ENCODE measurements at regions of chr7 and their contacts with region 1.

Region 1: DNA sequence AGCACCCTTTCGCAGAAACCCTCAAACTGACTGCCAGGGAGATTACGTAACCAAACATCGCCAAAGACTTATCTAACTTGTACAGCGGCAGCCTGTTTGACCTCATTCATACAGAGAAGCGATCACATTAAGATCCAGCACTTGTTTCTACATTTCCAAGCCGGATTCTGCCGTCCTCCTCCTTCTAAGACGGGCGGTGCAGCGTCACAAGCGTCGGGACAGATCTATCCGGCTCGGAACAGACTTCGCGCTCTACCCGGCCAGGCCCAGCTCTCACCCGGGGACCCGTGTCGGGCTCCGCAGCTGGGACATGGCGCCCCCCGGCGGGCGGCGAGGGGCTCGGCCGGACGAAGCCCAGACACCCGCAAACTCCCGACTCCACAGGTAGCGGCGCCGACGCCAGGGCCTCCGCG is 373 bp downstream of the H2AZ2 start:
- DNase-seq: peak; percentile 73 to 82 (median 82)
- H3K4me3 ChIP-seq: peak overlapping the region; percentile 79 to 98 (median 89)
- H3K4me3 Mint-ChIP-seq: peak overlapping the region; percentile 91 to 98
- H3K27ac ChIP-seq: peak overlapping the region; percentile 88 to 92
- H3K27ac Mint-ChIP-seq: peak overlapping the region; percentile 95 to 99 (median 98)
- H3K4me1 ChIP-seq: peaks cover 36 to 53% of the 10 kb centered on the region in 2 donors
- H3K4me1 Mint-ChIP-seq: peaks cover 48% of the 10 kb centered on the region
- H3K27me3 ChIP-seq: no peaks in the 10 kb centered on the region
- H3K27me3 Mint-ChIP-seq: no peaks in the 10 kb centered on the region
- CTCF ChIP-seq: peak; percentile 93

Region 2: GRCh38 chr7:44581879-44582603 is 265.5 kb before region 1 on chr7 and contains the start of gene TMED4:
- intact Hi-C with region 1: loop called (anchors 5 kb)
- DNase-seq: peak; percentile 99
- H3K4me3 ChIP-seq: peak within 1 kb of the TSS; percentile 69 to 90 (median 81)
- H3K4me3 Mint-ChIP-seq: peak within 1 kb of the TSS; percentile 87 to 95
- H3K27ac ChIP-seq: peak within 1 kb of the TSS; percentile 94 to 99
- H3K27ac Mint-ChIP-seq: peak within 1 kb of the TSS; percentile 97 to 99 (median 99)
- H3K4me1 ChIP-seq: peaks cover 18 to 22% of the 10 kb centered on the region in 2 donors
- H3K4me1 Mint-ChIP-seq: peaks cover 20% of the 10 kb centered on the region
- H3K27me3 ChIP-seq: no peaks in the 10 kb centered on the region
- H3K27me3 Mint-ChIP-seq: no peaks in the 10 kb centered on the region
- CTCF ChIP-seq: no peak
- polyA plus RNA-seq, gene TMED4: 45.7 to 76.7 (median 49.0) TPM

Region 3: GRCh38 chr7:44606450-44607254 is 240.9 kb before region 1 on chr7 and contains the start of gene OGDH:
- intact Hi-C with region 1: no loop called
- DNase-seq: peak; percentile 98 to 99 (median 99)
- H3K4me3 ChIP-seq: peak within 1 kb of the TSS; percentile 63 to 87 (median 82)
- H3K4me3 Mint-ChIP-seq: peak within 1 kb of the TSS; percentile 84 to 97
- H3K27ac ChIP-seq: peak within 1 kb of the TSS; percentile 90 to 96
- H3K27ac Mint-ChIP-seq: peak within 1 kb of the TSS; percentile 98 to 100 (median 99)
- H3K4me1 ChIP-seq: peaks cover 33 to 42% of the 10 kb centered on the region in 2 donors
- H3K4me1 Mint-ChIP-seq: peaks cover 40% of the 10 kb centered on the region
- H3K27me3 ChIP-seq: peaks cover 0 to 8% of the 10 kb centered on the region in 2 donors
- H3K27me3 Mint-ChIP-seq: peaks cover 3 to 8% (median 5%) of the 10 kb centered on the region in 3 donors
- CTCF ChIP-seq: no peak
- polyA plus RNA-seq, gene OGDH: 41.0 to 74.1 (median 49.9) TPM

Region 4: DNA sequence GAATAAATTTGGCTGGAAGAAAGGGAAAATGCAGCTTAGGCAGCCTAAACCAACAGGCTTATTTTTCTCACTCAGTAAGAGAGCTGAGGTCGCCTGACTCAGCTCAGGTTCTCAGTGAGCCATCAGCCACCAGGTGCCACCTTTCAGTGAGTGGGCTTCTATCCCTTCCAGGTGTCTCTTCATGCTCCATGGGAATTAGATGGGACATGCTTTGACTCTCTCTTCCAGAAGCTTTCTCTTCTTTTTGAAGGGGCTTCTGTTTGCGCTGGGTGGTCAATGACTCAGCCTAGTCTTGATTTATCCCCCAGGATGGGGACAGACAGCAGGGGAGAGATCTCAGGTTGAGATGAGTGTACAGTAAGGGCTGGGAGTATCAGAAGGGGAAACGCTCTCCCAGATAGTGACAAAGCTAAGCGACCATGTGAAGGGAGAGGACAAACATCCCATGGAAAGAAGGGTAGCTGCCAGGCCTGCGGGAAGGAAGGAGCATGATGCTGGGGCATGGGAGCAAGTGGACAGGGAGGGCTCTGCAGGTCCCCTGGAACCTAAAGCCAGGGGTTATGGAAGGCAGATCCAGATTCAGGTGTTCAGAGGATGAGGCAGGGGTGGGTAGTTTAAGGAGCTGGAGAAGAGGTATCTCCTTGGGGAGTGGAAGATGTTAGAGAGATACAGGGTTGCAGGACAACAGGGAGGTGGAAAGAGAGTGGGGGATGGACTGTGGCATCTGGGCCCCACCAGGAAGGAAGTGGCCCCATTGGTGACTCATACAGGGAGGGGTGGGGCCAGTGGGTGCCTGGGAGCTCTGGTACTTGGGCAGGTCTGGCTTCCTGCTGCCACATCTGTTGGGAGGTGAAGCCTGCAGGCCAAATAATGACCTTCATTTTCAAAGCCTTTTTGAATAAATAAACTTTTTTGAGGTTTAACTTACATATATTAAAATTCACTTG is 208.6 kb before region 1 on chr7:
- intact Hi-C with region 1: loop called in 1 of 2 experiments (anchors 10 kb)
- DNase-seq: peak; percentile 90 to 93 (median 92)
- H3K4me3 ChIP-seq: peak overlapping the region in 1 of 3 experiments; percentile 42
- H3K4me3 Mint-ChIP-seq: peak overlapping the region; percentile 66 to 86
- H3K27ac ChIP-seq: peak overlapping the region; percentile 97 to 100
- H3K27ac Mint-ChIP-seq: peak overlapping the region; percentile 100
- H3K4me1 ChIP-seq: peaks cover 66 to 68% of the 10 kb centered on the region in 2 donors
- H3K4me1 Mint-ChIP-seq: peaks cover 66% of the 10 kb centered on the region
- H3K27me3 ChIP-seq: no peaks in the 10 kb centered on the region
- H3K27me3 Mint-ChIP-seq: no peaks in the 10 kb centered on the region
- CTCF ChIP-seq: peak; percentile 19

Region 5: GRCh38 chr7:44797329-44798251 is 49.9 kb before region 1 on chr7:
- intact Hi-C with region 1: loop called (anchors 5 kb)
- DNase-seq: peak; percentile 78 to 86 (median 80)
- H3K4me3 ChIP-seq: peak overlapping the region; percentile 70 to 85 (median 82)
- H3K4me3 Mint-ChIP-seq: peak overlapping the region; percentile 92 to 96
- H3K27ac ChIP-seq: peak overlapping the region; percentile 94 to 95
- H3K27ac Mint-ChIP-seq: peak overlapping the region; percentile 97 to 99 (median 98)
- H3K4me1 ChIP-seq: peaks cover 23 to 30% of the 10 kb centered on the region in 2 donors
- H3K4me1 Mint-ChIP-seq: peaks cover 19% of the 10 kb centered on the region
- H3K27me3 ChIP-seq: no peaks in the 10 kb centered on the region
- H3K27me3 Mint-ChIP-seq: peaks cover 0 to 1% (median 0%) of the 10 kb centered on the region in 3 donors
- CTCF ChIP-seq: peak; percentile 63

Region 6: GRCh38 chr7:44914992-44915607 is 67.6 kb after region 1 on chr7:
- intact Hi-C with region 1: no loop called
- DNase-seq: peak; percentile 62 to 84 (median 64)
- H3K4me3 ChIP-seq: no peak overlapping the region
- H3K4me3 Mint-ChIP-seq: no peak overlapping the region
- H3K27ac ChIP-seq: peak overlapping the region in 1 of 2 donors; percentile 16
- H3K27ac Mint-ChIP-seq: peak overlapping the region in 3 of 7 donors; percentile 41 to 79 (median 57)
- H3K4me1 ChIP-seq: no peaks in the 10 kb centered on the region
- H3K4me1 Mint-ChIP-seq: peaks cover 3% of the 10 kb centered on the region
- H3K27me3 ChIP-seq: no peaks in the 10 kb centered on the region
- H3K27me3 Mint-ChIP-seq: peaks cover 0 to 6% (median 1%) of the 10 kb centered on the region in 3 donors
- CTCF ChIP-seq: no peak